GM12878 (cell line): ENCODE measurements at regions of chr7 and their contacts with region 1.

Region 1: GRCh38 chr7:95476904-95477594 is 8.7 kb upstream of the ASB4 start:
- DNase-seq: peak; percentile 28
- ATAC-seq: peak; percentile 73
- H3K4me3 ChIP-seq: no peak overlapping the region
- H3K27ac ChIP-seq: no peak overlapping the region
- H3K4me1 ChIP-seq: peaks cover 4% of the 10 kb centered on the region
- H3K27me3 ChIP-seq: no peaks in the 10 kb centered on the region
- CTCF ChIP-seq: peak; percentile 69 to 86 (median 74)
- EP300 ChIP-seq: no peak
- POLR2A ChIP-seq: no peak
- RAD21 ChIP-seq: peak; percentile 94

Region 2: GRCh38 chr7:95190515-95190914 is 286.5 kb before region 1 on chr7:
- CTCF ChIA-PET with region 1: interaction called, 37 read pairs
- POLR2A ChIA-PET with region 1: no interaction called
- RAD21 ChIA-PET with region 1: interaction called, 11 read pairs
- SMC1A ChIA-PET with region 1: interaction called, 21 read pairs
- in situ Hi-C with region 1: loop called (anchors 10 kb)
- intact Hi-C with region 1: loop called (anchors 1 kb)
- DNase-seq: no peak
- ATAC-seq: peak; percentile 68
- H3K4me3 ChIP-seq: no peak overlapping the region
- H3K27ac ChIP-seq: no peak overlapping the region
- H3K4me1 ChIP-seq: no peaks in the 10 kb centered on the region
- H3K27me3 ChIP-seq: no peaks in the 10 kb centered on the region
- CTCF ChIP-seq: peak; percentile 24 to 39 (median 34); a peak in 3 of 6 replicates
- EP300 ChIP-seq: no peak
- POLR2A ChIP-seq: no peak
- RAD21 ChIP-seq: peak; percentile 45; the same call in 1 of the 2 replicates

Region 3: DNA sequence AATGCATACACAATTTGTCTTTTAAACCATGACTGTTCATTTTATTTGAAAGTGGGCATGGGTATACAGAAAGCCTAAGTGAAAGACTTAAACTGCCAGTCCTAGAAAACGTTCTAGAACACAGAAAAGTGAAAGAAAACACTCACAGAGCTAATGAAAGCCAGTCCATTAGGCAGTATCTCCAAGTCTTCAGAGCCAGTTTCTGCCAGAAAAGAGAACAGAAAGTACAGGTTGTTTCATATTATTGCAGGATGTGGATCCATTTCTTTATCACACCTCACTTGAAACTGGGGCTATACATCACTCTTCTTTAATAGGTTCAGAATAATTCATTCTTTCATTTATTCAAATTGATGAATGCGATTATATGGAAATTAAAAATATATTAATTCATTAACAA is 160.5 kb before region 1 on chr7:
- CTCF ChIA-PET with region 1: interaction called, 3 read pairs
- POLR2A ChIA-PET with region 1: no interaction called
- RAD21 ChIA-PET with region 1: interaction called, 3 read pairs
- SMC1A ChIA-PET with region 1: interaction called, 6 read pairs
- in situ Hi-C with region 1: no loop called
- intact Hi-C with region 1: loop called (anchors 5 kb)
- DNase-seq: peak; percentile 8
- ATAC-seq: peak; percentile 95
- H3K4me3 ChIP-seq: no peak overlapping the region
- H3K27ac ChIP-seq: no peak overlapping the region
- H3K4me1 ChIP-seq: no peaks in the 10 kb centered on the region
- H3K27me3 ChIP-seq: no peaks in the 10 kb centered on the region
- CTCF ChIP-seq: no peak
- EP300 ChIP-seq: peak in 1 of 2 experiments; percentile 55; a peak in 2 of 4 replicates
- POLR2A ChIP-seq: no peak
- RAD21 ChIP-seq: no peak

Region 4: GRCh38 chr7:95411036-95411435 is 66.0 kb before region 1 on chr7:
- CTCF ChIA-PET with region 1: interaction called, 5 read pairs
- POLR2A ChIA-PET with region 1: no interaction called
- RAD21 ChIA-PET with region 1: interaction called, 12 read pairs
- SMC1A ChIA-PET with region 1: interaction called, 17 read pairs
- in situ Hi-C with region 1: no loop called
- intact Hi-C with region 1: no loop called
- DNase-seq: no peak
- ATAC-seq: no peak
- H3K4me3 ChIP-seq: no peak overlapping the region
- H3K27ac ChIP-seq: no peak overlapping the region
- H3K4me1 ChIP-seq: no peaks in the 10 kb centered on the region
- H3K27me3 ChIP-seq: no peaks in the 10 kb centered on the region
- CTCF ChIP-seq: no peak
- EP300 ChIP-seq: no peak
- POLR2A ChIP-seq: no peak
- RAD21 ChIP-seq: no peak

Region 5: GRCh38 chr7:95446618-95447017 is 30.4 kb before region 1 on chr7:
- CTCF ChIA-PET with region 1: interaction called, 14 read pairs
- POLR2A ChIA-PET with region 1: interaction called, 4 read pairs
- RAD21 ChIA-PET with region 1: interaction called, 16 read pairs
- SMC1A ChIA-PET with region 1: interaction called, 20 read pairs
- in situ Hi-C with region 1: no loop called
- intact Hi-C with region 1: no loop called
- DNase-seq: no peak
- ATAC-seq: no peak
- H3K4me3 ChIP-seq: no peak overlapping the region
- H3K27ac ChIP-seq: no peak overlapping the region
- H3K4me1 ChIP-seq: no peaks in the 10 kb centered on the region
- H3K27me3 ChIP-seq: no peaks in the 10 kb centered on the region
- CTCF ChIP-seq: no peak
- EP300 ChIP-seq: no peak
- POLR2A ChIP-seq: no peak
- RAD21 ChIP-seq: no peak

Region 6: DNA sequence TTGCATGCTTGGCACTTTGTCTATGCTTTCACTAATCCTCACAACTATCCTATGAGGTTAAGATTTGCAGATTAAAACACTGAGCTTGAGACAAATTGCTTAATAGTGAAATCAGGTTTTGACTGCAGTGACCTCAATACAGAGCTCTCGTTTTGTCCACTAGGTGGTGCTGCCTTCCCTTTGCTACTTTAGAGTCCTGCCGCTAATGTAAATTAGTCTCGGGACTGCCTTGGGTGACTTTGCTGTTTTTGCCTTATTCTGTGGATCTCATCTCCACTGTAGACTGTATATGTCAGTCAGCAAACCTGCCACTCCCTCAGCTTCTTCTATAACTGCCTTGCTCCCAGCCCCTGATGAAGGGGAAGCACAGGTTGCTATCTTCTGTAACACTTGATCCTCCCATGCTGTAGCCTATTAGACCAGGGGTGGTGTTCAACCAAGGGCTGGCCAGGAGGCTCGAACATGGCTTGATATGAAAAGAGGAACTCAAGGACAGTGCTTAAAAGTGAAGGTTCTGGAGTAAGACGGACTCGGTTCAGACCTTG is 34.7 kb after region 1 on chr7:
- CTCF ChIA-PET with region 1: interaction called, 117 read pairs
- POLR2A ChIA-PET with region 1: interaction called, 3 read pairs
- RAD21 ChIA-PET with region 1: interaction called, 19 read pairs
- SMC1A ChIA-PET with region 1: interaction called, 108 read pairs
- in situ Hi-C with region 1: no loop called
- intact Hi-C with region 1: no loop called
- DNase-seq: no peak
- ATAC-seq: peak; percentile 95
- H3K4me3 ChIP-seq: no peak overlapping the region
- H3K27ac ChIP-seq: no peak overlapping the region
- H3K4me1 ChIP-seq: no peaks in the 10 kb centered on the region
- H3K27me3 ChIP-seq: no peaks in the 10 kb centered on the region
- CTCF ChIP-seq: peak; percentile 78 to 88 (median 83)
- EP300 ChIP-seq: no peak
- POLR2A ChIP-seq: no peak
- RAD21 ChIP-seq: peak; percentile 72

Region 7: GRCh38 chr7:96061009-96061408 is 584.0 kb after region 1 on chr7:
- CTCF ChIA-PET with region 1: no interaction called
- POLR2A ChIA-PET with region 1: no interaction called
- RAD21 ChIA-PET with region 1: no interaction called
- SMC1A ChIA-PET with region 1: no interaction called
- in situ Hi-C with region 1: no loop called
- intact Hi-C with region 1: no loop called
- DNase-seq: no peak
- ATAC-seq: no peak
- H3K4me3 ChIP-seq: no peak overlapping the region
- H3K27ac ChIP-seq: no peak overlapping the region
- H3K4me1 ChIP-seq: no peaks in the 10 kb centered on the region
- H3K27me3 ChIP-seq: no peaks in the 10 kb centered on the region
- CTCF ChIP-seq: no peak
- EP300 ChIP-seq: no peak
- POLR2A ChIP-seq: no peak
- RAD21 ChIP-seq: no peak